ENCODE measurements at regions of chr4 and their contacts with region 1.

Region 1: GRCh38 chr4:112765317-112765975 is 128.5 kb downstream of the LARP7 start:
- DNase-seq: peak; percentile 4
- ATAC-seq: peak; percentile 74
- H3K4me3 Mint-ChIP-seq: no peak overlapping the region
- H3K27ac Mint-ChIP-seq: no peak overlapping the region
- H3K4me1 Mint-ChIP-seq: no peaks in the 10 kb centered on the region
- H3K27me3 Mint-ChIP-seq: no peaks in the 10 kb centered on the region
- CTCF ChIP-seq: peak; percentile 60

Region 2: DNA sequence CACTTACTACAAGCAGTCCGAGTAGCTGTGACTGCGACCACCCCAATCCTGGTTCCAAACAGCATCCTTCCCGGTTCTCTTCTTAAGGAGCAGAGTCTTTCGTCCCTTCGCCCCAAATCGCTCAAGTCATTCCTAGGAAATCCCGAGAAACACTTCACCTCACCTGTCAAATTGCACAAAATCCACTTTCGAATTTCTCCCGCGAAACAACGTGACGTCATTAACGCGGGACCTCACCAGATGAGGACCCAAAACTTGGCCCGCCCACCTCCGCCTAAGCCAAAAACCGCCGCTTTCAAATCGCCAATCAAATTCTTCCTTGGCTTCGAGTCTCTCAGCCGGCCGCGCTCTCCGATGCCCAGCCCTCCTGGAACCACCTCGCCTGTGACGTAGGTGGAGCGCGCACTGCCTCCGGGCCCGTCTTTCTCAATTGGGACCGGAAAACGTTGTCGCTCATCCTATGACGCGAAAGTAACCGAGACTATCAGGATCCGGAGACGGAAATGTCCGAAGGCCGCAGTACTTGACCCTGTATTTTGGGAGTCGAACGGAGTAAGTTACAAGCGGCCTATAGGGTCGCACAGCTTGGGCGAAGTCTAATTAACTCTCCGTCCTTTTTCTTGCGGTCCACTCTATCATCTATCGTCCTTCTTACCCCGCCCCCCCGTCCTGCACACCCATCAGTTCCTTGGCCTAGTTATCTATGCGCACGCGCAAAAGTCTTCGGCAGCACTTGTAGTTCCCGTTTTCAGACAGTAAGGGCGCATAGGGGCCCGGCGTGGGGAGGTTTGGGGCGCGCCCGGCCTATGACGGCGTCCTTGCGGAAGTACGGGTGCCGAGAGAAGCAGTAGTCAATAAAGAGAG is 128.5 kb before region 1 on chr4 and contains the starts of genes LARP7 and ZGRF1:
- CTCF ChIA-PET with region 1: interaction called, 56 read pairs
- POLR2A ChIA-PET with region 1: interaction called, 3 read pairs
- intact Hi-C with region 1: loop called (anchors 1 kb)
- DNase-seq: peak; percentile 99
- ATAC-seq: peak; percentile 95
- H3K4me3 Mint-ChIP-seq: no peak within 1 kb of the TSS
- H3K27ac Mint-ChIP-seq: no peak within 1 kb of the TSS
- H3K4me1 Mint-ChIP-seq: peaks cover 23% of the 10 kb centered on the region
- H3K27me3 Mint-ChIP-seq: no peaks in the 10 kb centered on the region
- CTCF ChIP-seq: peak; percentile 94
- total RNA-seq, gene LARP7: 43.2 TPM
- total RNA-seq, gene ZGRF1: 45.7 to 47.3 TPM

Region 3: DNA sequence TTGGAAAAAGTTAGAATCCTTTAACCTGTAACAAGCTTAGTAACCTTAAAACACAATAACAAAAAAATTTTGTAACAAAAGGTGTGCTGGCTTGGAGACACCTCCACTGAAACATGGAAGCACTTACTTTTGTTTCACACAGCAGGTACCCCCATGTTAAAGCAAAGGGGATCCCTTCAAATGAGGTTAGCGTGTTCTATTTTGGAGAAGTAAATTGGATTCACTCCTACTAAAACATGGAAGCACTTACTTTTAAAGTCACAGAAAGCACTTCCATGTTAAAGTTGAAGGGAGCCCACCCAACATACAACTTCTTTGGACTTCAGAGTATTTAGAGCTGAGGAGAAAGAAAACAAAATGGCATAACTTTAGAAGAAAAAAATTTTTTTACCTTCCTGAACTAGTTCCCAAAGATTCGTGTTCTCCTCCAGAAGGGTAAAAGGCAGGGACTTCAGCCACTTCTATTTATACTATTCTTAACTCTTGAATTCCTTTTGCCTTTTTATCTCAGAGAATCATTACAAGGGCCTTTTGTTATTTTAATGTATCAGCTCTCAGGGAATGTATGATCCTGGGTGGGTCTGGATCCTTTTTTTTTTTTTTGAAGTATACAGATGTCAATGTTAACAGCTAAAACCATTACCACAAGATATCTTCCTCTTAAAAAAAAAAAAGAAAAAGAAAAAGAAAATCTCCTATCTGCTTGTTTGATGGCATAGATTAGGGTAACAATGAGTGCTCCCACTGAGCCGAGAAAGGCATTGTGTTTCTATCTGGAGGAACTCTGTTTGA is 117.0 kb before region 1 on chr4:
- CTCF ChIA-PET with region 1: interaction called, 12 read pairs
- POLR2A ChIA-PET with region 1: no interaction called
- intact Hi-C with region 1: no loop called
- DNase-seq: no peak
- ATAC-seq: no peak
- H3K4me3 Mint-ChIP-seq: no peak overlapping the region
- H3K27ac Mint-ChIP-seq: no peak overlapping the region
- H3K4me1 Mint-ChIP-seq: no peaks in the 10 kb centered on the region
- H3K27me3 Mint-ChIP-seq: no peaks in the 10 kb centered on the region
- CTCF ChIP-seq: no peak

Region 4: GRCh38 chr4:112751447-112751846 is 14.0 kb before region 1 on chr4:
- CTCF ChIA-PET with region 1: interaction called, 31 read pairs
- POLR2A ChIA-PET with region 1: no interaction called
- intact Hi-C with region 1: no loop called
- DNase-seq: no peak
- ATAC-seq: no peak
- H3K4me3 Mint-ChIP-seq: no peak overlapping the region
- H3K27ac Mint-ChIP-seq: no peak overlapping the region
- H3K4me1 Mint-ChIP-seq: no peaks in the 10 kb centered on the region
- H3K27me3 Mint-ChIP-seq: peaks cover 11% of the 10 kb centered on the region
- CTCF ChIP-seq: no peak

Region 5: GRCh38 chr4:112938461-112939058 is 173.1 kb after region 1 on chr4:
- CTCF ChIA-PET with region 1: interaction called, 42 read pairs
- POLR2A ChIA-PET with region 1: no interaction called
- intact Hi-C with region 1: loop called (anchors 5 kb)
- DNase-seq: no peak
- ATAC-seq: peak; percentile 37
- H3K4me3 Mint-ChIP-seq: no peak overlapping the region
- H3K27ac Mint-ChIP-seq: no peak overlapping the region
- H3K4me1 Mint-ChIP-seq: no peaks in the 10 kb centered on the region
- H3K27me3 Mint-ChIP-seq: peaks cover 5% of the 10 kb centered on the region
- CTCF ChIP-seq: peak; percentile 65